ENCODE measurements at regions of chr15 and their contacts with region 1.

Region 1: DNA sequence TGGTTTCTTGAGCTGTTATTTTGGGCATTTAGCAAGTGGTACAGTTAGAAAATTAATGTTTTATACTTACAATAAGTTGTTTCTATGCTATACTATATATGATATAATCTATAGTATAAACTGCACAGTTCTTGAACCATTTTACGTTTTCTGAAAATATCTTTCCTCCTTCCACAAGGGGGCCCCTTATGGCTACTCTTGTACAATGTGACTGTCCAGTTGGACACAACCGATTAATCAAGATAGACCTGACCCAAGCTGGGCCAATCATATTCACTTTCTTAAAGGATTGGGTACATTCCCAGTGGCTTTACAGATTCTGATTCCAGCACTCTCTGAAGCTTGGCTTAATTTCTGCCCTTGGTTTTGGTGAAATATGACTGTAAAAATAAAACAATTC is 953.4 kb downstream of the AGBL1 start:
- DNase-seq: no peak
- H3K4me3 ChIP-seq: no peak overlapping the region
- H3K27ac ChIP-seq: no peak overlapping the region
- H3K4me1 ChIP-seq: peaks cover 19% of the 10 kb centered on the region
- H3K27me3 ChIP-seq: no peaks in the 10 kb centered on the region
- CTCF ChIP-seq: peak in 1 of 2 donors; percentile 31

Region 2: DNA sequence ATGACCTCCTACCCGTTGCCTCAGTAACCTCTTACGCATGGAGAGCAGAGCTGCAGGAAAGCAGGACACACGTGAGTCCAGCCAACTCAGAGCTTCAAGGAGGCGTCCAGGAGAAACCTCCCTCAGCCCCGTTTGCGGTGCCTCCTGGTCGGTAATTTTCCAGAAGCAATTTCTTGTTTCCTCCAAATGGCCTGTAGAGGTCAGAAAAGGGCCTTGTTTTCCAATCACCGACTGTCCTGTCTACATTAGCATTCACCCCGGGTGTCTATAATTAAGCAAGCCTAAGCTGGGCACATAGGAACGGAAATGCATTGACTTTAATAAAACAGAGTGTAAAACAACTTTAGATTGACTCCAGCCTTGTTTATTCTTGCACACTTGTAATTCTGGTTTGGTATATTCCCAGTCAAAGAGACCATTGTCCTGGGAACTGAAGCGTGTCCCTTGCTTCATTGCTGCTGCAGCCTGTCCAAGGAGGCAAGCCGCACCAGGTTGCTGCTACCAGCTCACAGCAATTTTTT is 117.2 kb before region 1 on chr15:
- CTCF ChIA-PET with region 1: no interaction called
- dilution Hi-C with region 1: no loop called
- in situ Hi-C with region 1: no loop called
- intact Hi-C with region 1: loop called (anchors 5 kb)
- DNase-seq: peak; percentile 65
- H3K4me3 ChIP-seq: no peak overlapping the region
- H3K27ac ChIP-seq: no peak overlapping the region
- H3K4me1 ChIP-seq: peaks cover 9% of the 10 kb centered on the region
- H3K27me3 ChIP-seq: no peaks in the 10 kb centered on the region
- CTCF ChIP-seq: peak; percentile 43 to 67

Region 3: DNA sequence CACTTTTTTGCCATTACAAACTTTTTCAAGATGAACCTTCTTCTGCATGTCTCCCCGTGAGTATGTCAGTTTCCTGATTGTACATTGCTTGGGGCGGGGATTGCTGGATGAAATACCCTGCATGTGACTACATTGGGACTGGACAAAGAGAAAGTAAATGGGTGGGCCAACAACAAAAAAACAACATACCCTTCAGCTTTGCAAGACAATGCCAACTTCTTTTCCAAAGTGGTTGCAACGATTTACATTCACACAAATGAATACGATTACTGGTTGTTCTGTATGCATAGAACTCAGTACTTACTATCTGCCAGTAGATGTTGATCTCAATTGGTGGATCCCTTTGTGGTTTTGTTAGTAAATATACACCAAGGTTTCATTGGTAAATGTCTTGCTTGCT is 45.0 kb before region 1 on chr15:
- CTCF ChIA-PET with region 1: no interaction called
- dilution Hi-C with region 1: no loop called
- in situ Hi-C with region 1: no loop called
- intact Hi-C with region 1: no loop called
- DNase-seq: no peak
- H3K4me3 ChIP-seq: no peak overlapping the region
- H3K27ac ChIP-seq: no peak overlapping the region
- H3K4me1 ChIP-seq: no peaks in the 10 kb centered on the region
- H3K27me3 ChIP-seq: no peaks in the 10 kb centered on the region
- CTCF ChIP-seq: no peak

Region 4: GRCh38 chr15:87144775-87145174 is 111.7 kb after region 1 on chr15:
- CTCF ChIA-PET with region 1: no interaction called
- dilution Hi-C with region 1: no loop called
- in situ Hi-C with region 1: no loop called
- intact Hi-C with region 1: no loop called
- DNase-seq: peak; percentile 13
- H3K4me3 ChIP-seq: no peak overlapping the region
- H3K27ac ChIP-seq: no peak overlapping the region
- H3K4me1 ChIP-seq: peaks cover 3% of the 10 kb centered on the region
- H3K27me3 ChIP-seq: no peaks in the 10 kb centered on the region
- CTCF ChIP-seq: no peak

Region 5: DNA sequence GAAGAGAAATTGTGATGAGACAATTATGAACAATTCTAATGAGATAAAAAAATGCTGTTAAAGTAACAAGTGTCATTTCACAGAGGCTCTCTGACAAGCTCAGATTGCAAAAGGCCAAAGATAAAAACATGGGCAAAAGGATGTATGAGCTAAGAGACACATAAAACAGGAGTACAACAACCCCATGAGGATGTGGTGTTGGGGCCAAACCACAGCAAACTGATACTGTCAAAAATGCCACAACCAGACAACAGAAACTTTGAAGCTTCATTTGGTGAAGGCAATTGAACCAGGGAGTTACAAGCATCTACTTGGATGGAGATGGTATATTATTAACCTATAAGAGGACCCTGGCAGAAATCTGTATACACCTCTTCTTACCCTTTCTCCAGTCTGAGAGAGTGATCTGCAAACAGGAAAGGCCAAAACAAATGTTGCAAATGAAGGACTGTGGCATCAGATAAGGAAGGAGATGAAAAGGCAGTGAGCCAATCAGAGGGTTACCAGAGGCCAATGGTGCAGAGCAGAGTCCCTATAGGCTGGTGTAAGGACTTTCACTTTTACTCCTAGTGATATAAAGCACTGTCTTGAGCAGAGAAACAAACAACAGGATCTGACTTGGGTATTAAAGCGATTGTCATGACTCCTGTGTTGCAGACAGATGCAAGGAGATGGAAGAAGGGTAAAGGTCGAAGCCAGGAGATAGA is 564.4 kb after region 1 on chr15:
- CTCF ChIA-PET with region 1: no interaction called
- dilution Hi-C with region 1: no loop called
- in situ Hi-C with region 1: loop called in 1 of 2 experiments (anchors 25 kb)
- intact Hi-C with region 1: no loop called
- DNase-seq: no peak
- H3K4me3 ChIP-seq: no peak overlapping the region
- H3K27ac ChIP-seq: no peak overlapping the region
- H3K4me1 ChIP-seq: no peaks in the 10 kb centered on the region
- H3K27me3 ChIP-seq: no peaks in the 10 kb centered on the region
- CTCF ChIP-seq: no peak